CD4-positive, alpha-beta memory T cell (primary cell): ENCODE measurements at regions of chr3 and their contacts with region 1.

Region 1: DNA sequence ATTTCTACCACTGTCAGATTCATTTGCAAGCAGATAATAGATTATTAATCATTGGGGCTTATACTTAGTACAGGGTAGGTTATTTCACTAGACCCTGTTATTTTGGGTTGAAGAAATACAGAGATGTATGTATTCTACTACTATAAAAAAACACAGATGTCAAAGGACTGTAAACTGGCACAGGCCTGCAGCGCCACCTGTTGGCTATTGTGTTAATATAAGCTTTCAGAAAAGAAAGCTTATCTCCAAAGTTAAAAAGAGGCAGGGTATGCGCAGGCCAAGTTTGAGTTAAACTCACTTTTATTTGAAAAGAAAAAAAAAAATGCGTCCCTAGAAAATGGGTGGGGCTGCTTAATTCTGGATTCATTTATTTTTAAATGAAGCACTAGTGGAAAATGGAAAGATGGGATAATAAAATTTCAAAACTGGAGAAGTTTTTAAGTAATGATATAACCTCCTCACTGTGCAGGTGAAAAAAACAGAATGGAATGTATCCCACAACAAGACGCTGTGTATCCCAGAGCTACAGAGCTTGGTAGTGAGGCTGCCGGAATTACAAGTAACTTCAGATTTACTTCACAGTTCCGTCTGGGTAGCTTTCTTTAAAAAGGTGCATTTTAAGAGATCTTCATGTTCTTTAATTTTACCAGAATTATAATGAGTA is 407.2 kb upstream of the TGFBR2 start:
- DNase-seq: peak; percentile 41 to 44 (median 43)
- H3K4me3 ChIP-seq: no peak overlapping the region
- H3K4me3 Mint-ChIP-seq: no peak overlapping the region
- H3K27ac ChIP-seq: no peak overlapping the region
- H3K27ac Mint-ChIP-seq: no peak overlapping the region
- H3K4me1 ChIP-seq: no peaks in the 10 kb centered on the region
- H3K4me1 Mint-ChIP-seq: no peaks in the 10 kb centered on the region
- H3K27me3 ChIP-seq: no peaks in the 10 kb centered on the region
- H3K27me3 Mint-ChIP-seq: no peaks in the 10 kb centered on the region

Region 2: GRCh38 chr3:29914861-29915524 is 284.2 kb before region 1 on chr3:
- CTCF ChIA-PET with region 1: no interaction called
- POLR2A ChIA-PET with region 1: no interaction called
- intact Hi-C with region 1: no loop called
- DNase-seq: no peak
- H3K4me3 ChIP-seq: no peak overlapping the region
- H3K4me3 Mint-ChIP-seq: no peak overlapping the region
- H3K27ac ChIP-seq: no peak overlapping the region
- H3K27ac Mint-ChIP-seq: no peak overlapping the region
- H3K4me1 ChIP-seq: no peaks in the 10 kb centered on the region
- H3K4me1 Mint-ChIP-seq: no peaks in the 10 kb centered on the region
- H3K27me3 ChIP-seq: no peaks in the 10 kb centered on the region
- H3K27me3 Mint-ChIP-seq: peaks cover 0 to 5% of the 10 kb centered on the region in 2 donors

Region 3: GRCh38 chr3:30042274-30042859 is 156.9 kb before region 1 on chr3:
- CTCF ChIA-PET with region 1: interaction called, 21 read pairs
- POLR2A ChIA-PET with region 1: no interaction called
- intact Hi-C with region 1: loop called (anchors 5 kb)
- DNase-seq: peak; percentile 43 to 55 (median 44)
- H3K4me3 ChIP-seq: no peak overlapping the region
- H3K4me3 Mint-ChIP-seq: no peak overlapping the region
- H3K27ac ChIP-seq: no peak overlapping the region
- H3K27ac Mint-ChIP-seq: no peak overlapping the region
- H3K4me1 ChIP-seq: no peaks in the 10 kb centered on the region
- H3K4me1 Mint-ChIP-seq: no peaks in the 10 kb centered on the region
- H3K27me3 ChIP-seq: peaks cover 2% of the 10 kb centered on the region
- H3K27me3 Mint-ChIP-seq: peaks cover 24 to 26% of the 10 kb centered on the region in 2 donors

Region 4: DNA sequence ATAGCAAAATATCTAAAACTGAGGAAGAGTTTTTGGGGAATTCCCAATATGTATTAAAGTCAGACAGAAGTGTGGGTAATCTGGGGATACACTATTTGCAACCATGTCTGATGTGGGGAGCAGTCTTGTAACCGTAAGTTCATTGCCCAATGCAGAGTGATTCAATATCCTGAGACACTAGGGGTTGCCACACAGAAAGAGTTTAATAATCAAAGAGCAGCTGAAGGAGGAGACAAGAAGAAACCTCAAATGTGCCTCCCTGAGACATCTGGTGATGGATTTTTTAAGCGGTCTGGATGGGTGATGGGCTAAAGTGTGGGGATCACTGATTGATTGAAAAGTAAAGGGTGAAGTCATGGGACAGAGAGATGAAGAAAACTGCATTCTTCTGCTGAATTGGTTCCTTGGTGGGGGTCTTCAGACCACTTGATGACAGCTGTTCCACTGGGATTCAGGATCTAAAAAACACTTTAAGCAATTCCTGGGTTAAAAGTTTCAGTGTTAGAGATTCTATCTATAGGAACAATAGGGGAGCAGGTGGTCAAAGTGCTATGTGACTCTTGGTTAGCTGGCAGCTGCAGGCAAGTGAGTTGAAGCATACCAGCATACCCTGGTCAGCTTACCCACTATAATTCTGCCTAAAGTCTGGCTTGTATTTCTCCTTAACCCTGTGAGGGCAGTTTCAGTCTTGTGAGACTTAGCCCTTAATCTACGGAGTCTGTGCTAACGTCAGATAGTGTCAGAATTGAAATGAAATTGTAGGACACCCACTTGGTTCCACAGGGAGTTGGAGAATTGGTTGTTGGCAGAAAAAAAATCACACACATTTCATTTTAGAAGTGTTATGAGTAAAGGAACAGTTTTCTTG is 18.7 kb before region 1 on chr3:
- CTCF ChIA-PET with region 1: interaction called, 26 read pairs
- POLR2A ChIA-PET with region 1: no interaction called
- intact Hi-C with region 1: no loop called
- DNase-seq: no peak
- H3K4me3 ChIP-seq: no peak overlapping the region
- H3K4me3 Mint-ChIP-seq: no peak overlapping the region
- H3K27ac ChIP-seq: no peak overlapping the region
- H3K27ac Mint-ChIP-seq: no peak overlapping the region
- H3K4me1 ChIP-seq: no peaks in the 10 kb centered on the region
- H3K4me1 Mint-ChIP-seq: no peaks in the 10 kb centered on the region
- H3K27me3 ChIP-seq: no peaks in the 10 kb centered on the region
- H3K27me3 Mint-ChIP-seq: peaks cover 7 to 8% of the 10 kb centered on the region in 2 donors

Region 5: GRCh38 chr3:30231277-30232141 is 32.3 kb after region 1 on chr3:
- CTCF ChIA-PET with region 1: interaction called, 12 read pairs
- POLR2A ChIA-PET with region 1: no interaction called
- intact Hi-C with region 1: no loop called
- DNase-seq: no peak
- H3K4me3 ChIP-seq: no peak overlapping the region
- H3K4me3 Mint-ChIP-seq: no peak overlapping the region
- H3K27ac ChIP-seq: no peak overlapping the region
- H3K27ac Mint-ChIP-seq: no peak overlapping the region
- H3K4me1 ChIP-seq: peaks cover 7% of the 10 kb centered on the region
- H3K4me1 Mint-ChIP-seq: peaks cover 3 to 11% (median 10%) of the 10 kb centered on the region in 4 donors
- H3K27me3 ChIP-seq: no peaks in the 10 kb centered on the region
- H3K27me3 Mint-ChIP-seq: no peaks in the 10 kb centered on the region

Region 6: DNA sequence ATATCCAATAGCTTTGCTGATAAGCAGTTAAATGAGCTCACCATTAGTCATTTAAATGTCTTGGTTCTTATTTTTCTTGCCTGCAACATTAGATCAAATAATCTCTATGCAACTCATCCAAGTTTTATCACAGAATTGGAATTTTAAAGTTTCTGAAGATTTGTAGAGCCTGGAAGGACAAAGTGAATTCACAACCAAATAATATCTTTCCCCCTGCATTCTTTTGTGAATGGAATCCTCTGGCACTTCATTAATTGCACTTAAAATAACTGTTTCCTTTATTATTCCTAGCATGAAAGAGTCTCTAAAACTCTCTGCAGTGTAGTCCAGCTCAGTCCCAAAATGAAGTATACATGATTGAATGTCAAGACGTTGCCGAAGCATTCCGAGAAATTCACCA is 61.5 kb after region 1 on chr3:
- CTCF ChIA-PET with region 1: interaction called, 12 read pairs
- POLR2A ChIA-PET with region 1: no interaction called
- intact Hi-C with region 1: no loop called
- DNase-seq: no peak
- H3K4me3 ChIP-seq: no peak overlapping the region
- H3K4me3 Mint-ChIP-seq: no peak overlapping the region
- H3K27ac ChIP-seq: no peak overlapping the region
- H3K27ac Mint-ChIP-seq: no peak overlapping the region
- H3K4me1 ChIP-seq: no peaks in the 10 kb centered on the region
- H3K4me1 Mint-ChIP-seq: peaks cover 10 to 20% (median 12%) of the 10 kb centered on the region in 4 donors
- H3K27me3 ChIP-seq: no peaks in the 10 kb centered on the region
- H3K27me3 Mint-ChIP-seq: no peaks in the 10 kb centered on the region

Region 7: GRCh38 chr3:30273304-30274072 is 74.3 kb after region 1 on chr3:
- CTCF ChIA-PET with region 1: no interaction called
- POLR2A ChIA-PET with region 1: no interaction called
- intact Hi-C with region 1: no loop called
- DNase-seq: no peak
- H3K4me3 ChIP-seq: no peak overlapping the region
- H3K4me3 Mint-ChIP-seq: no peak overlapping the region
- H3K27ac ChIP-seq: no peak overlapping the region
- H3K27ac Mint-ChIP-seq: no peak overlapping the region
- H3K4me1 ChIP-seq: no peaks in the 10 kb centered on the region
- H3K4me1 Mint-ChIP-seq: no peaks in the 10 kb centered on the region
- H3K27me3 ChIP-seq: no peaks in the 10 kb centered on the region
- H3K27me3 Mint-ChIP-seq: peaks cover 1% of the 10 kb centered on the region in 2 donors

Region 8: GRCh38 chr3:30628901-30629590 is 429.8 kb after region 1 on chr3:
- CTCF ChIA-PET with region 1: interaction called, 13 read pairs
- POLR2A ChIA-PET with region 1: no interaction called
- intact Hi-C with region 1: loop called (anchors 1 kb)
- DNase-seq: peak in 4 of 5 donors; percentile 38 to 54 (median 44)
- H3K4me3 ChIP-seq: no peak overlapping the region
- H3K4me3 Mint-ChIP-seq: peak overlapping the region in 7 of 8 donors; percentile 55 to 82 (median 64)
- H3K27ac ChIP-seq: peak overlapping the region; percentile 60
- H3K27ac Mint-ChIP-seq: peak overlapping the region; percentile 89 to 97 (median 94)
- H3K4me1 ChIP-seq: peaks cover 99% of the 10 kb centered on the region
- H3K4me1 Mint-ChIP-seq: peaks cover 71 to 98% (median 84%) of the 10 kb centered on the region in 4 donors
- H3K27me3 ChIP-seq: no peaks in the 10 kb centered on the region
- H3K27me3 Mint-ChIP-seq: no peaks in the 10 kb centered on the region